Sciatic nerve (tissue), 2 donors: ENCODE measurements at regions of chr17 and their contacts with region 1.

Region 1: GRCh38 chr17:67053438-67054000 is 9.2 kb downstream of the CACNG1 start:
- DNase-seq: no peak
- ATAC-seq: no peak

Region 2: GRCh38 chr17:67035131-67036083 is 18.1 kb before region 1 on chr17:
- intact Hi-C with region 1: loop called (anchors 1 kb)
- DNase-seq: no peak
- ATAC-seq: no peak